Activated naive CD4-positive, alpha-beta T cell treated with anti-CD3 and anti-CD28 coated beads for 36 hours (primary cell): ENCODE measurements at regions of chr6 and their contacts with region 1.

Region 1: DNA sequence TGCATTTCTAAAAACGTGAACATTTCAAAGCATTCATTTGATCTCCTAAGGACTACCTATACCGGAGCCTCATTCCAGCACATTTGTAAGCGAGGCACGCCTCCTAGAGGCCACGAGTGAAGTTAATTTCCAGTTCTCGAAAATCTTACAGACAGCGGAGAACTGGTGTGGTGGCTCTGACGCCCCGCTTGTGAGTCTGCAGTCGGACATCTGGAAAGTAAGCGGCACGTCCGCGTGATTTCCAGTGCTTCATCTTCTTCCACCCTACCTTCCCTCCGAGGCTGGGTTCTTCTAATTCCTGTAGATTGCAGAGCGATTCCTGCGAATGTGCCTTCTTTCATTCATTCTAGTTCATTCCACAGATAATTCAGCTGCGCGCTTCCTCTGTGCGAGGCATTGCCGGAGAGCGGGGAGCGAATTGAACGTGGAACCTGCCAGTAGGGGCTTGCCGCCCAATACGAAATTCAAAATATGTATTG is 810 bp upstream of the PRIM2 start:
- DNase-seq: peak; percentile 91
- H3K4me3 Mint-ChIP-seq: peak overlapping the region; percentile 99
- H3K27ac Mint-ChIP-seq: peak overlapping the region; percentile 99
- H3K4me1 Mint-ChIP-seq: peaks cover 30% of the 10 kb centered on the region
- H3K27me3 Mint-ChIP-seq: no peaks in the 10 kb centered on the region

Region 2: DNA sequence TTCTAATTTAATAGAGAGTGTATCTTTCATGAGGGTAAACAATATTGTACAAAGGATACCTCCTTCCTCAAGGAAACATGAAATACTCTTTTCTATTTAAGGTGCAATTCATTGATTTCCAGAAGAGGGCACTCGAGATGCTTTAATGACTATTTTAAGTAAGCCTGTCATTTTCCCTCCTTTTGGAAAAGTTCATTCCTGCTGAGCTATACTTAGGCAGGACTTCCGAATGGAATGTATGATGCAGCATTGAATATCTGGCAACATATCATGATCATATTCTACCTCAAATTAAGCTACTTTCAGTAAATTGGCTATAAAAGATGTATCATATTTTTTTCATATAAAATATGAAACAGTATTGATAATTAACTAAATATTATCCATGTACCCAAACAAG is 679.0 kb before region 1 on chr6:
- CTCF ChIA-PET with region 1: no interaction called
- intact Hi-C with region 1: loop called (anchors 1 kb)
- DNase-seq: no peak
- H3K4me3 Mint-ChIP-seq: no peak overlapping the region
- H3K27ac Mint-ChIP-seq: no peak overlapping the region
- H3K4me1 Mint-ChIP-seq: no peaks in the 10 kb centered on the region
- H3K27me3 Mint-ChIP-seq: peaks cover 10% of the 10 kb centered on the region

Region 3: GRCh38 chr6:56902641-56903464 is 413.8 kb before region 1 on chr6:
- CTCF ChIA-PET with region 1: interaction called, 97 read pairs
- intact Hi-C with region 1: loop called (anchors 1 kb)
- DNase-seq: no peak
- H3K4me3 Mint-ChIP-seq: no peak overlapping the region
- H3K27ac Mint-ChIP-seq: no peak overlapping the region
- H3K4me1 Mint-ChIP-seq: peaks cover 2% of the 10 kb centered on the region
- H3K27me3 Mint-ChIP-seq: peaks cover 5% of the 10 kb centered on the region

Region 4: DNA sequence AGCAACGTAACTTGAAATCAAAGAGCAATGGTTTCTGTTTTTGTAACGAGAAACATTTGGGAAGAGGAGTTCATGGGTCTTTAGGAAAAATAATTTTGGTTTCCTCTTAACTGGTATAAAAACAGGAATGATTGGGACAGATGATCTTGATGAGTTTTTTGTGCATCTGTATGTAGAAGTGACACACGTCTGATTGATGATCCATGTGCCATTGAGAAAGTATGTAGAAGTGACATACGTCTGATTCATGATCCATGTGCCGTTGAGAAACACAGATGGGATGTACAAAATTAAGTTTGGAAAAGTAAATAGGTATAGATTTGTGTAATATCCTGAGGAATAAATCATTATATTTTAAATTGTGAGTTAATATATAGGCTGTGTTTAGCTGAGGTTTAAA is 268.0 kb before region 1 on chr6:
- CTCF ChIA-PET with region 1: no interaction called
- intact Hi-C with region 1: loop called (anchors 1 kb)
- DNase-seq: no peak
- H3K4me3 Mint-ChIP-seq: peak overlapping the region; percentile 68
- H3K27ac Mint-ChIP-seq: no peak overlapping the region
- H3K4me1 Mint-ChIP-seq: peaks cover 21% of the 10 kb centered on the region
- H3K27me3 Mint-ChIP-seq: peaks cover 14% of the 10 kb centered on the region

Region 5: GRCh38 chr6:57190140-57190539 is 126.5 kb before region 1 on chr6:
- CTCF ChIA-PET with region 1: interaction called, 3 read pairs
- intact Hi-C with region 1: loop called (anchors 1 kb)
- DNase-seq: no peak
- H3K4me3 Mint-ChIP-seq: no peak overlapping the region
- H3K27ac Mint-ChIP-seq: no peak overlapping the region
- H3K4me1 Mint-ChIP-seq: no peaks in the 10 kb centered on the region
- H3K27me3 Mint-ChIP-seq: no peaks in the 10 kb centered on the region

Region 6: DNA sequence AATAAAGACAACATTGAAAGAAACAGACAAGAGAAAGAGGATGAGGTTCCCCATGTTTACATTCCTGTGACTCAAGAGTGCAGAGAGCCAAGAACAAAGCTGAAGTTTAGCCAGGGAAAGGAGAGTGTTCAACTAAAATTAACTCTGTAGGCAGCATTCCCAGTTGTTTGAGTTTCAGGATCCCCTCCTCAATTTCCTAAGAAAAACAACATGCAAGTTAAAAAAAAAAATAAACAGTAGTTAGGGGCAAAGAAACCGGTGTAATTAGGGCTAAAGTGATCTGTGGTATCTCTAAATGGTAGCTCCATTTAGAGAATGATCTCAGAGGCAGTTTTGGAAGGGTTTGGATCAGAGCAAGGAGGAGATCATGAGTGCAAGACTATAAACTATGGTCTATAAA is 63.6 kb before region 1 on chr6:
- CTCF ChIA-PET with region 1: no interaction called
- intact Hi-C with region 1: no loop called
- DNase-seq: no peak
- H3K4me3 Mint-ChIP-seq: no peak overlapping the region
- H3K27ac Mint-ChIP-seq: no peak overlapping the region
- H3K4me1 Mint-ChIP-seq: no peaks in the 10 kb centered on the region
- H3K27me3 Mint-ChIP-seq: no peaks in the 10 kb centered on the region

Region 7: GRCh38 chr6:57469072-57469471 is 152.5 kb after region 1 on chr6:
- CTCF ChIA-PET with region 1: no interaction called
- intact Hi-C with region 1: no loop called
- DNase-seq: no peak
- H3K4me3 Mint-ChIP-seq: no peak overlapping the region
- H3K27ac Mint-ChIP-seq: no peak overlapping the region
- H3K4me1 Mint-ChIP-seq: no peaks in the 10 kb centered on the region
- H3K27me3 Mint-ChIP-seq: no peaks in the 10 kb centered on the region